AG04450 (cell line): ENCODE measurements at regions of chr2 and their contacts with region 1.

Region 1: GRCh38 chr2:158753641-158754611 is 41.2 kb upstream of the DAPL1 start:
- DNase-seq: peak; percentile 30
- H3K4me3 ChIP-seq: peak overlapping the region; percentile 21; the same call in 1 of the 2 replicates
- H3K27ac ChIP-seq: no peak overlapping the region
- H3K27me3 ChIP-seq: peaks cover 10% of the 10 kb centered on the region
- CTCF ChIP-seq: peak; percentile 93

Region 2: DNA sequence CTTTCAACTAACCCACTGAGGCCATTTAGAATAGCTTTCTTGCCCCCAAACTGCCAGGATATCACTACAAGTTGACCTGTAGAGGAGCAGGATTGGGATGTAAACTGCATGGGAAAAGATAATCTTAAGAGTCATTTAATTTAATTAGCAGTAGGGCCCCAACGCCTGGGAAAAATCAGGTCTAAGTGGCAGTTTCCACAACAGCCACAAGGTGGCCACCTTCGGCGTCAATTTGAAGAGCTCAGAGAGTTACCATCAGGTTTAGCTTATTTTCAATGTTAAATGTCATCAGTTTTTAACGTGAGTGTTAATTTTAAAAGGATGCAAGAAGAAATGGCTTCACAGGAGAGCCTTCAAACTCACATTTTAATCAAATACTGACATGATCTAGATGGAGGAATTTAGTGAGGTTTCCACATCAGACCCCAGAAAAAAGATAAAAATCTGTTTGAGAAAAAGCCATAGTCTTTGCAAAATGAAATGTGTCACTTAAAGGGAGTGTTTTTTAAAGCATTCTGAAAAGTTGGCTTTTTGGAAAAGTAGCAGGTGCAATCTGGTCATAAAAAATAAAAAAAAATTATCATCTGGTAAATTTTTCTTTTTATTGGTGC is 729.5 kb before region 1 on chr2:
- CTCF ChIA-PET with region 1: interaction called, 177 read pairs
- POLR2A ChIA-PET with region 1: no interaction called
- DNase-seq: no peak
- H3K4me3 ChIP-seq: no peak overlapping the region
- H3K27ac ChIP-seq: no peak overlapping the region
- H3K27me3 ChIP-seq: no peaks in the 10 kb centered on the region
- CTCF ChIP-seq: peak; percentile 87

Region 3: GRCh38 chr2:158179660-158180059 is 574.3 kb before region 1 on chr2:
- CTCF ChIA-PET with region 1: interaction called, 73 read pairs
- POLR2A ChIA-PET with region 1: no interaction called
- DNase-seq: no peak
- H3K4me3 ChIP-seq: no peak overlapping the region
- H3K27ac ChIP-seq: no peak overlapping the region
- H3K27me3 ChIP-seq: no peaks in the 10 kb centered on the region
- CTCF ChIP-seq: peak; percentile 51

Region 4: GRCh38 chr2:158473719-158474392 is 280.1 kb before region 1 on chr2:
- CTCF ChIA-PET with region 1: no interaction called
- POLR2A ChIA-PET with region 1: no interaction called
- DNase-seq: no peak
- H3K4me3 ChIP-seq: no peak overlapping the region
- H3K27ac ChIP-seq: no peak overlapping the region
- H3K27me3 ChIP-seq: no peaks in the 10 kb centered on the region
- CTCF ChIP-seq: no peak

Region 5: DNA sequence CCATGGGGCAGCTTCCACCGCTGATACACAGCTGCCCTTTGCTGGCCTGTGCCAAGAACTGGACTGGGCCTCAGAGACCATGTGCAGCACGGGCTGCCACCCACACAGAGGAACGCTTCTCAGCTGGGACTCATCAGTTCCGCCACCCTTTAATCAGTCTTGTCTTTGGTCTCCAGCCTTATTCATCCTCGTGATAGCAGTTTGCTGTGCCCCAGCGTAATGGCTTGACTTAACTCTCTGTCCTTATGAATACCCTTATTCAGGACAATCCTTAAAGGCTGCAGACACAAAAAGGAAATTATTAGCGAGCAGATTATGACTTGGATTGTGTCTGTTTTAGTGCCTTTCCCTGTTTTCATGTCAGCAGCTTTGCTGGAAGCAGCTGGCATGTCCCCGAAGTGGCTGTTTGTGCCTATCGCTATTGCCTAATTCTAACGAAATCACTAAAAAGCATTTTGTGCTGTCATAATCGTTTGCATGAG is 67.7 kb before region 1 on chr2:
- CTCF ChIA-PET with region 1: interaction called, 16 read pairs
- POLR2A ChIA-PET with region 1: no interaction called
- DNase-seq: no peak
- H3K4me3 ChIP-seq: no peak overlapping the region
- H3K27ac ChIP-seq: no peak overlapping the region
- H3K27me3 ChIP-seq: no peaks in the 10 kb centered on the region
- CTCF ChIP-seq: no peak

Region 6: GRCh38 chr2:158773121-158773520 is 19.2 kb after region 1 on chr2:
- CTCF ChIA-PET with region 1: interaction called, 20 read pairs
- POLR2A ChIA-PET with region 1: no interaction called
- DNase-seq: no peak
- H3K4me3 ChIP-seq: no peak overlapping the region
- H3K27ac ChIP-seq: no peak overlapping the region
- H3K27me3 ChIP-seq: no peaks in the 10 kb centered on the region
- CTCF ChIP-seq: no peak

Region 7: GRCh38 chr2:158828493-158829164 is 74.7 kb after region 1 on chr2:
- CTCF ChIA-PET with region 1: no interaction called
- POLR2A ChIA-PET with region 1: no interaction called
- DNase-seq: no peak
- H3K4me3 ChIP-seq: no peak overlapping the region
- H3K27ac ChIP-seq: no peak overlapping the region
- H3K27me3 ChIP-seq: peaks cover 3% of the 10 kb centered on the region
- CTCF ChIP-seq: no peak